Activated naive CD4-positive, alpha-beta T cell treated with anti-CD3 and anti-CD28 coated beads for 36 hours (primary cell): ENCODE measurements at regions of chr3 and their contacts with region 1.

Region 1: GRCh38 chr3:105366326-105367062 is at the start of gene ALCAM:
- DNase-seq: peak; percentile 90
- H3K4me3 Mint-ChIP-seq: peak within 1 kb of the TSS; percentile 93
- H3K27ac Mint-ChIP-seq: peak within 1 kb of the TSS; percentile 97
- H3K4me1 Mint-ChIP-seq: peaks cover 32% of the 10 kb centered on the region
- H3K27me3 Mint-ChIP-seq: peaks cover 16% of the 10 kb centered on the region
- total RNA-seq, gene ALCAM: 17.5 to 18.7 TPM

Region 2: DNA sequence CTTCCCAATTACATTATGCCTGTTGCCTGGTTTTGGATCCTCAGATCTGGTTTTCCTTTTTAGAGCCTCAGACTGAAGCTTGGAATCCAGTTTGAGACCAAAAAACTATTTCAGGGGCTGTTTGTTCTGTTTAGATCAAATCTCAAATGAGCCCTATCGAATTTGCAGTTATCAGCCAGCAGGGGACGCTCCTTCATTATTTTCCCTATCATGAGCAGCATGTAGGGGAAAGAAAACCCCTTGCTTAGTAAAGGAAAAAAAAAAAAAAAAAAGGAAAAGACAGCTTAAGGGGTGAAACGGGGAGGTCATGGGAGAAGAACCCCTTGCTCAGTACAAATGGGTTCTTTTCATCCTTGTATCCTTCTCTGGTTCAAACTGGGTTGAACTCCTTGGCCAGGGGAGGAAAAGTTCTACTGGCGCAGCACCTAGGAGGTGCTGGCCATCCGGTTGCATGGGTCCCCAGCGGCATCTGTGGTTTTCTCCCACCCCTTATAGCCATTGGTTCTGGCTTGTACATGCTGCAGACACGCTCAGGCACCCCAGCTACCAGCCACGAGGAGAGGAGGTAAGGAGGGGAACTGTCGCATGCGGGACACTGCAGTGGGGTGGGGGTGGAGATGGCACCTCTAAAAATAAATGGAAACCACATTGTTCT is 1374.9 kb before region 1 on chr3:
- CTCF ChIA-PET with region 1: no interaction called
- intact Hi-C with region 1: loop called (anchors 5 kb)
- DNase-seq: no peak
- H3K4me3 Mint-ChIP-seq: no peak overlapping the region
- H3K27ac Mint-ChIP-seq: no peak overlapping the region
- H3K4me1 Mint-ChIP-seq: no peaks in the 10 kb centered on the region
- H3K27me3 Mint-ChIP-seq: no peaks in the 10 kb centered on the region

Region 3: DNA sequence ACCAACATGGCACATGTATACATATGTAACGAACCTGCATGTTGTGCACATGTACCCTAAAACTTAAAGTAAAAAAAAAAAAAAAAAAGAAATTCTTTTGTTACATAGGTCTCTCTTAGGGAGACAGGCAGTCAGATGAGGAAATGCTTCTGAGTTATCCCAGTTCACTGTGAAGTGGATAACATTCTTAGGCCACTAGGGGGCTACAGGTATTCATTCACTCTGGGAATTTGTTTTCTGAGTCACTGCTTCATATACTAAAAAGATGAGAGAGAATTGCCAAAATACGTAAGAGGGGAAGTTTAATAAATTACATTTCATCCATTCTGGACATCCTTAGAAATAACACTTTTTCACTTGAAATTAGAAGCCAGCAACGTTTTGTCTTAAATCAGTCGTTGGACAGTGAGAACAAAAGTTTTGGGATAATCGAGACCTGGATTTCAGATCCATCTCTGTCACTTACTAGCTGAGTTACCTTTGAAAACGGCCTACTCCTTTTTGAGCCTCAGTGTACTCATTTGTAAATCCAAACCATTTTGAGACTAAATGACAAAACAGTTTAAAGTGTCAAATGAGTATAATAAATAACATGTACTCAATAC is 738.2 kb before region 1 on chr3:
- CTCF ChIA-PET with region 1: interaction called, 3 read pairs
- intact Hi-C with region 1: loop called (anchors 1 kb)
- DNase-seq: no peak
- H3K4me3 Mint-ChIP-seq: no peak overlapping the region
- H3K27ac Mint-ChIP-seq: no peak overlapping the region
- H3K4me1 Mint-ChIP-seq: no peaks in the 10 kb centered on the region
- H3K27me3 Mint-ChIP-seq: peaks cover 5% of the 10 kb centered on the region

Region 4: GRCh38 chr3:105752744-105753415 is 386.4 kb after region 1 on chr3:
- CTCF ChIA-PET with region 1: no interaction called
- intact Hi-C with region 1: loop called (anchors 5 kb)
- DNase-seq: peak; percentile 46
- H3K4me3 Mint-ChIP-seq: peak overlapping the region; percentile 42
- H3K27ac Mint-ChIP-seq: peak overlapping the region; percentile 92
- H3K4me1 Mint-ChIP-seq: peaks cover 77% of the 10 kb centered on the region
- H3K27me3 Mint-ChIP-seq: no peaks in the 10 kb centered on the region

Region 5: DNA sequence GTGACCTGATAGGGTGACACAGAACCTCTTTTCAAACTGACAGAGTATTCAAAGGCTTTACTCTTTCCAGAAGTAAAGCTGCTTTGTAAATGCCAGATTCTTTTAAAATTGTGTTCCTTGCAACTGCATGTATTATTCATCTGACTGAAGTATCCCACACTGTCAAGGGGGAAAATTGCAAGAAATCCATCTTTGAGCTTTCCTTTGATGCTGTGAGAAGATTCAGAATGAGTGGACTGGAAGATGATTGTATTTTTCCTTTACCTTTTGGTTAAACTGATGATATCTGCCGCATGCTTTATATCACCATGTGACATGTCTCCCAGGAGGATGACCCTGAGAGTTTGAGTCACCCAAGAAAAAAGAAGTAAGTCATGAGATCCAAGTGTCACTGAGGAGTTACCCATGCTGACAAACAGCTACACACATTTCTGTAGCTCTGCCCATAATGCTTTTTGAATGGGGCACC is 753.2 kb after region 1 on chr3:
- CTCF ChIA-PET with region 1: no interaction called
- intact Hi-C with region 1: loop called (anchors 2 kb)
- DNase-seq: peak; percentile 57
- H3K4me3 Mint-ChIP-seq: no peak overlapping the region
- H3K27ac Mint-ChIP-seq: peak overlapping the region; percentile 73
- H3K4me1 Mint-ChIP-seq: peaks cover 28% of the 10 kb centered on the region
- H3K27me3 Mint-ChIP-seq: no peaks in the 10 kb centered on the region

Region 6: DNA sequence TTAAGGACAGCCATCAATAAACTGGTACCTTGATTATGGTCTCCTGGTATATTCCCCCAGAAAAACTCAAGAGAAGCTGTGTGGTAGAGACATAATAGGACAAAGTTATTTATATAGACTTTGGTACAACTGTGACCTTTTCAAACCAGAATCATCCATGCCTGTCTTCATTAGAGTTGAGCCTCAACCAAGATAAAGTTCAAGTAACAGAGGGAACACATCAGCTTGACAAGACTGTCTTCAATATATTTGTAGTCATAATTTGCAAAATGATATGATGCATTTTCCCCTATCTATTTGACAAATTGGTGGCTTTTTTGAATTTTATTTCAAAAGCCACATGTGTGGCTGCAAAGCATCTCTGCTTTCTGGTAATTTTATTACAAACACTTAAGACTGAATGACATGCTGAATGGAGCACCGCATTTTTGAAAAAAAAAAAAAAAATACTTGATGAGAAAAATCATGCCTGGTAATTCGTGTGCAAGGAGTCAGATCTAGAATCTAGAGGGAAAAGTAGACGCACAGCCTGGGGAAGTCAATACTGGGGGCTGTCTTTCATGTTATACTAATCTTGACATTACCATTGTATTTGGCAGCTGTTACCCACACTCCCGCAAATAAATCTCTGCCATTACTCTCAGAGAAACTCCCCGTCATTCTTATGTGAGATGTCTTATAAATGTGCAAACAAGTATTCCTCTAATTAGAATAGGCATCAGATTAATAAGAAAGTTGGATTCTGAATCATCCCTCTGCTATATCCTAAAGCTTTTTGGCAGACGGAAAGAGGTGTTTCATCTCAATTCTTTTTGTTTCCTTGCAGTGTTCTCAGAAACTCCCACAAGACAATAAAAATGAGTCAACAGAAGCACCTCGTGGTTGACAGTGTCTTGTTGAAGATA is 1057.1 kb after region 1 on chr3:
- CTCF ChIA-PET with region 1: no interaction called
- intact Hi-C with region 1: loop called (anchors 1 kb)
- DNase-seq: peak; percentile 55
- H3K4me3 Mint-ChIP-seq: no peak overlapping the region
- H3K27ac Mint-ChIP-seq: peak overlapping the region; percentile 80
- H3K4me1 Mint-ChIP-seq: peaks cover 46% of the 10 kb centered on the region
- H3K27me3 Mint-ChIP-seq: peaks cover 2% of the 10 kb centered on the region